GM10248 (cell line): ENCODE measurements at regions of chr11 and their contacts with region 1.

Region 1: DNA sequence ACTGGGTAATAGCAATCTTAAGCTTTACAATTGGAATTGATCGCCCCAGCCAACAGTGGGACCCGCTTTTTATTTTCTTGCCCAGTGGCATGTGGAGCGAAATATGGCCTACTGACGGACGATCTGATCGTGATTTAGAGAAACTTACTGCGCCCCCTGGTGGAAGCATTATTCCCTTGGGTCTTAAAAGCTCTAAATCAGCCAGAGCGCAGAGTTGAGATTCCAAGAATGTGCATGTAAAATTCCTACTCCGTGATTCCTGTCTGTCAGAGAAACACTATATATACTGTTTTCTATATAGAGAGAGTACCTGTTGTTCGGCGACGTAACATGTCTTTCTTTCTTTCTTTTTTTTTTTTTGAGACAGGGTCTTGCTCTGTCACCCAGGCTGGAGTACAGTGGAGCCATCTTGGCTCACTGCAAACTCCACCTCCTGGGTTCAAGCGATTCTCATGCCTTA is 3.7 kb upstream of the DPF2 start:
- DNase-seq: peak; percentile 71
- CTCF ChIP-seq: peak; percentile 83

Region 2: GRCh38 chr11:65251476-65251875 is 78.5 kb before region 1 on chr11:
- CTCF ChIA-PET with region 1: interaction called, 14 read pairs
- POLR2A ChIA-PET with region 1: no interaction called
- DNase-seq: no peak
- CTCF ChIP-seq: no peak

Region 3: DNA sequence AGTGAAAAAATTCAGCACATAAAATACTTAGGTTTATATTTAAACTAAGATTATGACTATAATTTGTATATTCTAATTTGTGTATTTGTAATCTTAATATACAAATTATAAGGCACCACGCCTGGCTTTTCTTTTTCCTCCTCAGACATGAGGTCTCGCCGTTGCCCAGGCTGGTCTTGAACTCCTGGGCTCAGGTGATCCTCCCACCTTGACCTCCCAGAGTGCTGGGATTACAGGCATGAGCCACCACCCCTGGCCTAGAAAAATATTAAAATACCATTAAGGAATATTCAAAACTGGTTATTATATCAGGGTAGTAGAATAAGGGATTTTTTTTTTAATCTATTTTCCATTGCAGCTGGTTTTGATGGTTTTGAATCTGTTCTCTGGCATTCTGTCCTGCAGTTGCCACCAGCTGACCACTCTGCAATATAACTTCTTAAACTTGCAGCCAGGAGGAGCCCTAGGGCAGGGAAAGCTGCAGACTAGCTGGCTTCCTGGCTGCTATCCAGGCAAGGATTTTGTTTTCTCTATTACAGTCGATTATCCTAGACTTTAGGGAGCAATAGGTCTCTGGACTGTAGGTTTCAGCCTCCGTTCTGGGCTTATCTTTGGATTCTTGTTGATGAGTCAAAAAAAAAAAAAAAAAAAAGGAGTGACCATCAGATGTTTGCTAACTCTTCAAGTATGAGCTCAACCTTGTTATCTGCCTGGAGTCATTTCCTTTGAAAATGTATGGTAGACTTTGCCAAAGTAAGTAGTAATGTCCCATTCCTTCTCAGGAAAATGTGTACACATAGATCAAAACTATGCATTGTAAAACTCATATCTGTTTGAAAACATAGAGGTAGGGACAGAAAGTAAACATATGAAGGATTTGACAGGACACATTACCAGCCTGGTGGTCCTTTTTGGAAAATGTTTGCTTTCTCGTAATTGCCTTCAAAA is 55.0 kb before region 1 on chr11:
- CTCF ChIA-PET with region 1: interaction called, 686 read pairs
- POLR2A ChIA-PET with region 1: interaction called, 5 read pairs
- DNase-seq: peak; percentile 55
- CTCF ChIP-seq: peak; percentile 84

Region 4: DNA sequence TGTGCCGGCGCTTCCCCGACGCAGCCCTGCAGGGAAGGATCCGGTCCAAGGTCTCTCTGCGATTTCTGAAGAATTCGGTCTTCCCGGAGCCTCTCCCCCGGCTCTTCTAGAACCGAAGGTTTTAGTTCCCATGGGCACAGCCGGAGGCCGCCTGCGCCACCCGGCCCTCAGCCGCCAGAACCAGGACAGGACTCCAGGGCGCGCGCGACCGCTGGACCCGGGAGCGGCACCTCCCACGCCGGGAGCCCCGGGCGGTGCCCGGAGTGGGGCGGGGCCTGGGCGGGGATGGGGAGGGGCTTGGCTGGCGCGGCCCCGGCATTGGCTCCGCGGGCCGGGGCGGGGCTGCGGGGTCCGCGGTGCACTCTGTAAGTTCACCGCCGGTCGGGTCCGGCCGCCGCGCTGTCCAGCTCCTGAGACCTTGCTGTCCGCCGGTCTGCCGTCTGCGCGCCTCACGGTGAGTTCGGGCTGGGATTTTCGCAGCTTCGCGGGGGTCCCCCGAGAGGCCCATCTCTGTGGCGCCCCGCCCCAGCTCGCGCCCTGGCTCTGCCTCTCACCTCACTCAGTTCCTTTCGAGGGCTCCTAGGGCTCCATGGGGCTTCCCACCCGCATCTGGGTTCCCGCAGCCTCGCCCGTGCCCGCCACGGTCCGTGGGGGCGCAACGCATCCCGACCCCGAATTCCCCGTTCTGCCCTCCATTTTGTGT is 15.3 kb before region 1 on chr11 and contains the start of gene CDC42EP2:
- CTCF ChIA-PET with region 1: interaction called, 288 read pairs
- POLR2A ChIA-PET with region 1: interaction called, 8 read pairs
- DNase-seq: peak; percentile 94
- CTCF ChIP-seq: no peak

Region 5: DNA sequence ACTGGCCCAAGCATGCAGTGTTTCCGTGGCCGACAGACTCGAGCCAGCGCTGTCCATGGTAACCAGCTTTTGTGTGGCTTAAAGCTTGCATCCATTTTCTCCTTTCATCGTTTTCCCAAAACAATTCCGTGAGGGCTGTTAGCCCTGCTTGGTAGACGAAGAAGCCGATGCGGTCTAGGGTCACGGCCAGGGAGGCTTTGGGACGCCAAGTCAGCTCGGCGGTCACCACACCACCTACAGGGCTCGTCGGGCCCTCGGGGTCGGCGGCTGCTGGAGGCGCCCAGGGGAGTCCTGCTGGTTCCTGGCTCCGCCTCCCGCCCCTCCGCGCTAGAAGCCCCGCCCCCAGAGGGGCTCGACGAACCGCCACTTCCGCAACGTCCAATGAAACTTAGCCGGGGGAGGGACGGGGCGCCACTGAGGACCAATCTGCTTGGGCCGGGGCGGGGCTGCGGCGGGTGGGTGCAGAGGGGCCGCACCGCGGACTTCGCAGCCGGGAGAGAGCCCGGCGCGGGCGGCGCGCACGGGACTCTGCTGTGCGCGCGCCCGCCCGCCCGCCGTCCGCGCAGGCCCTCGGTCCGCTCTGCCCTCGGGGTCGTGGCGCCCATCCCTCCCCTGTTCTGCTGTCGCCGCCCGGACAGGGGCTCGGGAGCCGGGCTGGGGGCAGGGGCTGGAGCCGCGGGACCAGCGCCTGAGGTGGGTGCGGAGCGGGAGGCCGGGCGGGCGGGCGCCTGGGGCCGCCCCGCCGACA is 24.5 kb after region 1 on chr11 and contains the start of gene TIGD3:
- CTCF ChIA-PET with region 1: interaction called, 29 read pairs
- POLR2A ChIA-PET with region 1: interaction called, 3 read pairs
- DNase-seq: peak; percentile 100
- CTCF ChIP-seq: no peak

Region 6: GRCh38 chr11:65604258-65604657 is 274.3 kb after region 1 on chr11:
- CTCF ChIA-PET with region 1: no interaction called
- POLR2A ChIA-PET with region 1: interaction called, 10 read pairs
- DNase-seq: no peak
- CTCF ChIP-seq: no peak